PC-3 (cell line): ENCODE measurements at regions of chr13 and their contacts with region 1.

Region 1: DNA sequence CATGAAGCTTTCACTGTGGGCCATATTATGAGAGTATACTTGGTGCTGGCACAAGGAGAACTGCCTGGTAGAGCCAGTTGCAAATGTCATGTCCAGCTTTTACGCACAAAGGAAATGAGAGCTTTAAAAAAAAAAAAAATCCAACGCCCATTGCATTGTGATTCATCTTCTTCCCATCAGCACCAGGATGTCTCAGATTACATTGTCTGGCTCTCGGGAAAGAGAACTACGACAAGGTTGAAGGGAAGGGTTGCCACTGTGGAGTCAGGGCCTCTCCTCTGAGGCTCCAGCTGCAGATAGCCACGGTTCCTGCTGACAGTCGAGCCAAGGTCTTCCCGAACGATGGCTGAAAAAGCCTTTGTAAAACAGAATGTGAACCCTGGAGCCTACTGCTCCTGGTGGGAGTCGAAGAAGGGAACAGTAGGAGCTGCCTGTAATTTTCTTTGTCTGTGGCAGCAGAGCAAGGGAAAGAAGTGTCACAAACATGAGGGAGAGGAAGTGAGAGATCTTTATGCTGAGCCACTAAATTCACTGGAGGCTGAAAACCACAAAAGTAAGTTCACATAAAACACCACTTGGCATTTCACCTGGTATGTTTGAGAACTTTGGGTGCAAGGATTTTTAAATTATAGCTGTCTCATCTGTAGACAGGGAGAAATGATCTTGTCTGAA is 704.7 kb downstream of the DIAPH3 start:
- DNase-seq: peak; percentile 76
- ATAC-seq: peak; percentile 95
- H3K4me3 ChIP-seq: peak overlapping the region; percentile 46
- H3K27ac ChIP-seq: peak overlapping the region; percentile 97
- H3K4me1 ChIP-seq: peaks cover 22% of the 10 kb centered on the region
- H3K27me3 ChIP-seq: no peaks in the 10 kb centered on the region
- CTCF ChIP-seq: no peak

Region 2: DNA sequence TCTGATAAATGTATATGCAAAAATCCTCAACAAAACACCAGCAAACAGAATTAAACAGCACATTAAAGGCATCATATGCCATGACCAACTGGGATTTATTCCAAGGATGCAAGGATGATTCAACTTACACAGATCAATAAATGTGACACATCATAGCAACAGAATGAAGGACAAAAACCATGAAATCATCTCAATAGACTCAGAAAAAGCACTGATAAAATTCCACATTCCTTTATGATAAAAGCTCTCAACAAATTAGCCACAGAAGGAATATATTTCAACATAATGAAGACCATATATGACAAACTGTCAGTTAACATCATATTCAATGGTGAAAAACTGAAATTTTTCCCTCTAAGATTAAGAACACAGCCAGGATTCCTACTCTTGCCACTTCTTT is 13.1 kb after region 1 on chr13:
- CTCF ChIA-PET with region 1: interaction called, 6 read pairs
- POLR2A ChIA-PET with region 1: no interaction called
- intact Hi-C with region 1: loop called (anchors 1 kb)
- DNase-seq: peak; percentile 72
- ATAC-seq: peak; percentile 81
- H3K4me3 ChIP-seq: no peak overlapping the region
- H3K27ac ChIP-seq: peak overlapping the region; percentile 58
- H3K4me1 ChIP-seq: peaks cover 17% of the 10 kb centered on the region
- H3K27me3 ChIP-seq: no peaks in the 10 kb centered on the region
- CTCF ChIP-seq: no peak

Region 3: GRCh38 chr13:59531571-59532091 is 72.6 kb after region 1 on chr13:
- CTCF ChIA-PET with region 1: no interaction called
- POLR2A ChIA-PET with region 1: interaction called, 7 read pairs
- intact Hi-C with region 1: loop called (anchors 5 kb)
- DNase-seq: peak; percentile 77
- ATAC-seq: peak; percentile 60
- H3K4me3 ChIP-seq: no peak overlapping the region
- H3K27ac ChIP-seq: peak overlapping the region; percentile 54
- H3K4me1 ChIP-seq: peaks cover 37% of the 10 kb centered on the region
- H3K27me3 ChIP-seq: no peaks in the 10 kb centered on the region
- CTCF ChIP-seq: no peak